ENCODE measurements at regions of chr3 and their contacts with region 1.

Region 1: DNA sequence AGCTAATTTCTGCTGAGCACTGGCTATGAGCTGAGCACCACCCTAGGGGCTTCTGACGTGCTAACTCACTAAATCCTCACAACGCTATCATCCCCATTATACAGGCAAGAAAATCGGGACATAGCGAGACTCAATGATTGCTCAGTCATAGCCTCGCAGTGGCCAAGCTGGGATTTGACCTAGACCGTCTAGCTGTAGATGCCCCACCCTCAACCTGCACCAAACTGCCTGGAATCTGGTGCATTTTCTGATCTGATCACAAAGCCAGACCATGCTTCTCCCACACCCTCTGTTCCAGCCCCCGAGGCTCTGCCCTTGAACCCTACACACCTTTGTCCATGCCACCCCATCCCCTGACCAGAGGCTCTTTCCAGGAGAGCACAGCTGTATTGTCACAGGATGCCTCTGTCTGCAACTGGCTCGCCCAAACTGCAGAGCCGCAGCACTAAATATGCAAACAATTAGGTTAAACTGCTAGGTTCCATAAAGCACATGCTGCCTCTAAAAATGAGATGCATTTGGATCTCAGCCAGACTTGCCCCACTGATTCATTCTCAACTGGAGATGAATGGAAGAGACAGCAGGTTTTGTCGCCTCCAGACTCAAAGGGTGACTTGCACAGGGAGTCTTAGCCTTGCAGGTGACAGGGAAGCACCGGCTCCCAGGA is 95.2 kb downstream of the NUP210 start:
- DNase-seq: no peak

Region 2: DNA sequence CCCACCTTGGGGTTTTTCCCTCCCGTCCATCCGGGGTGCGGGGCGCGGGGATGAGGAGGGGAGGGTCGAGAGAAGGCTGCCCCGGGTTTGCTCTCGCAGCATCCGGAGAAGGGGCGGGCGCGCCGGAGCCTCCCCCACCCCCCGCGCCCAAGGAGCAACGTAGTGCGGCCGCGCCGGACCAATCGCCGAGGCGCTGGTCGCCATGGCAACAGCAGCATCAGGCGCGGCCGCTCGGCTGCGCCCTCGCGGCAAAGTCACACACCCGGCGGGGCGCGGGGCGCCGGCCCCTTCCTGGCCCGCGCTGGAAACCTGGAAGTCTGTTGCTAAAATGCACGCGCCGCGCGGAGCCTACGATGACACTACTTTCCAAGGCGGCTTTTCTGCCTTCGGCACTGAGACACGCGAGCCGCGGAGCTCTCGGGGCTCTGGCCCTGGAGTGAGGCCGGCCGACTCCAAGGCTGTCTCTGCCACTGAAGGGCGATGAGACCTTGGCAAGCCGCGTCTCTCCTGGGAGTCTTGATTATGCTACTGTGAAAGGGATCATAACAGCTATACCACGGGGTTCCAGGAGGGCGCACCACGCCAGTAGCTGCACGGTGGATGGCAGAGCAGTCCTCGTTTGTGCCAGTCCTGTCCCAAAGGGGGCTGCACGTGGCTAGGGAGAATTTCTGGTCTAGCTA is 251.5 kb before region 1 on chr3 and contains the start of gene IQSEC1:
- in situ Hi-C with region 1: no loop called
- DNase-seq: peak; percentile 87
- total RNA-seq, gene IQSEC1: 6.5 and 10.7 TPM in 2 replicates

Region 3: GRCh38 chr3:13141991-13142412 is 183.0 kb before region 1 on chr3:
- in situ Hi-C with region 1: no loop called
- DNase-seq: no peak

Region 4: GRCh38 chr3:13254028-13254951 is 70.7 kb before region 1 on chr3:
- in situ Hi-C with region 1: loop called (anchors 5 kb)
- DNase-seq: no peak

Region 5: GRCh38 chr3:13364602-13365271 is 39.8 kb after region 1 on chr3:
- in situ Hi-C with region 1: no loop called
- DNase-seq: no peak

Region 6: GRCh38 chr3:13518516-13518953 is 193.6 kb after region 1 on chr3:
- in situ Hi-C with region 1: loop called (anchors 10 kb)
- DNase-seq: peak; percentile 98

Region 7: DNA sequence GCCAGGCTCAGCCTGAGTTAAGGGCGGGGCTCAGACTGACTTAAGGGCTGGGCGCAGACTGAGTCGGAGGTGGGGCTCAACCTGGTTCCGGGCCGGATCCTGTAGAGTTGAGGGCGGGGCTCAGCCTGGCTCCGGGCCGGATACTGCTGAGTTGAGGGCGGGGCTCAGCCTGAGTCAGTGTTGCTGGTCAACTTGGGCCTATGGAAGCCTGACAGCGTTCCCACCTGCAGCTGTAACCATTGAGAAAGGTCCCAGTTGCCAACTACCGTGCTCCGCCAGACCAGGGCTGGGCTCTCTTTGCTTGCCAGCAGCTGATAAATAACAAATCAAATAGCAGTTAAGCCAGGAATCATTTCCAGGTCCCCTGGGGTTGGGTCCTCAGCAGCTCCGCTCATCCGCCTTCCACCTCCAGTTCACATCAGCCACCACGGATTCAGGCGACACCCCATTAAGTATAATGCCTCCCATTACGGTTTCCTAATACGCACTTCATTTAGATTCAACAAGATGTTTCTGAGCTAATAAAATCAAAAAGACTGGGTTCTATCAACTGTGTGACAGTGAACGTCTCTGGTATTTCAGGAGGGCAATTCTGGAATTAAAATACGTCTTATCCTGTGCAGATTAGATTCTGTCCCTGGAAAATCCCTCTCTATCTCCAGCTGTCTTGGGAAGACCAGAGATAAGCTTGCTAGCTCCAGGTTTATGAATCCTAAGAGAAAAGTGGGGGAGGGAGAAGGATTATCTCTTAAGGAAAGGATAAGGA is 1207.9 kb after region 1 on chr3:
- in situ Hi-C with region 1: no loop called
- DNase-seq: no peak

Measured in G401 (cell line).